ENCODE measurements at regions of chr1 and their contacts with region 1.

Region 1: DNA sequence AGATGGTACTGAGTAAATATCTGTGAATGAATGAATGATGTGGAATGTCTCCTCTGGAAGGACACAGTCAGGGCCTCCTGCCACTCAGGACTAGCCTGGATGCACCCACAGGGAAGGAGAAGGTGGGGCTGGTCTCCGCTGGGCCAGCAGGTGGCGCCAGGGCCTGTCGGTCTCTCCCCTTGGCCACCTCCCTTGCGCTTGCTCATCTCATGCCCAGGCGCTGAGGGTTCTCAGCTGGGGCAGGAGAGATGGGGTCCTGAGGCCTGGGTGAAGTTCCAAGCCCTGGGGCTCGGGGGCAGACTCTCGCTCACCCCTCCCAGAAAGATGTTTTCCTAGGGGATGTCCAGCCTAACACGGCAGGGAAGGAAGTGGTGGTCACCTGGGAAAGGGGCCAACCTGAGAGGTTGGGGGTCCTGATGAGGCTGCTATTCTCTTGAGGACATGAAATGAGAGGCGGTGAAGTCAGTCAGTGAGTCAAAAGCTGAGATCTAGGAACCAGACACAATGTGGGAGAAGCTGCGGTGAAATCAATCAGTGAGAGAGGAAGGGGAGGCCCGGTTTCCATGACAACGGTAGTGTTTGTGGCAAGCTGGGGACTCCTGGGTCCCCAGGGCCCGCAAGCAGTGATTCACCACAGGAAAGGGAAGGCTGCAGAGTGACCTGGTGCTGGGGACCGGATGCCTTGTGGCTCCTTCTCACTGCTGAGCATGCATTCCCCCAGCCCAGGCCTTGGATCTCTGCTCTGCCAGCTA is 14.6 kb upstream of the MEX3A start:
- DNase-seq: peak; percentile 87
- H3K4me3 Mint-ChIP-seq: peak overlapping the region; percentile 22
- H3K27ac Mint-ChIP-seq: peak overlapping the region; percentile 25
- H3K4me1 Mint-ChIP-seq: peaks cover 20% of the 10 kb centered on the region
- H3K27me3 Mint-ChIP-seq: peaks cover 88% of the 10 kb centered on the region

Region 2: DNA sequence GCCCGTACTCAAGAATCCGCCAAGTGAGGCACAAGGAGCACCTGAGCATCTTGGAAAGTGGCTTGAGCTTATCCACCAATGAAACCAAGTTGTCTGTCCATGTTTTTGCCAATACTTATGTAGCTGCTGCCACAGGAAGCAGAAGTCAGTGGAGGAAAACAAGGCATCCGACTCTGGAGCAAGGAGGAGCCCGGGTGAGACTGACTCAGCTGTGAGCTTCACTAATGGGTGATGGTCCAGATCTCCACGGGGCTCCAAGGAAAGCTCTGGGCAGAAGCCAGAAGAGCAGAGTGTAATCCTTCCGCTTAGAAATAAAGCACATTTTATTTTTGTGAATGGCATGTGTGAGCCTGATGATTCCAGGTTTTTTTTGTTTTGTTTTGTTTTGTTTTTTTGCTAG is 63.8 kb before region 1 on chr1:
- CTCF ChIA-PET with region 1: no interaction called
- DNase-seq: no peak
- H3K4me3 Mint-ChIP-seq: no peak overlapping the region
- H3K27ac Mint-ChIP-seq: no peak overlapping the region
- H3K4me1 Mint-ChIP-seq: peaks cover 2% of the 10 kb centered on the region
- H3K27me3 Mint-ChIP-seq: peaks cover 10% of the 10 kb centered on the region

Region 3: DNA sequence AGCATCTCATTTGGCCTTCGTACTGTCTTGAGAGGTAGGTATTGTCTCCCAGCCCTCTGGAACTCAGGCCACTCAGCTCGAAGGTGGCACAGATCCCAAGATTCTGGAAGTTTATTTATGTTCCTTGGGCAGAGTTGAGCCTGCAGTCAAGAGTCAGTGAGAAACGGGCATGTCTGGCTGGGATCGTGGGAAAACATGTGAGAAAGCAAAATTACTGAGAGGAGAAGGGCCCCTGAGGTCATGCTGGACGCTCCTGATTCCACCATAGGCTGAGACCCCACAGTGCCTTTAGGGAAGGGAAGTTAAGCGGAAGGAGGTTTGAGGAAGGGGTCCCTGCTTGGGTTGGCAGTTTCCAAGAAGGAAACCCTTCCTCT is 44.0 kb after region 1 on chr1:
- CTCF ChIA-PET with region 1: interaction called, 668 read pairs
- DNase-seq: no peak
- H3K4me3 Mint-ChIP-seq: no peak overlapping the region
- H3K27ac Mint-ChIP-seq: no peak overlapping the region
- H3K4me1 Mint-ChIP-seq: peaks cover under 1% of the 10 kb centered on the region
- H3K27me3 Mint-ChIP-seq: peaks cover 15% of the 10 kb centered on the region

Region 4: GRCh38 chr1:156346636-156347035 is 249.8 kb after region 1 on chr1:
- CTCF ChIA-PET with region 1: no interaction called
- DNase-seq: no peak
- H3K4me3 Mint-ChIP-seq: no peak overlapping the region
- H3K27ac Mint-ChIP-seq: no peak overlapping the region
- H3K4me1 Mint-ChIP-seq: peaks cover 3% of the 10 kb centered on the region
- H3K27me3 Mint-ChIP-seq: peaks cover 28% of the 10 kb centered on the region